A549 (cell line): ENCODE measurements at regions of chr19 and their contacts with region 1.

Region 1: DNA sequence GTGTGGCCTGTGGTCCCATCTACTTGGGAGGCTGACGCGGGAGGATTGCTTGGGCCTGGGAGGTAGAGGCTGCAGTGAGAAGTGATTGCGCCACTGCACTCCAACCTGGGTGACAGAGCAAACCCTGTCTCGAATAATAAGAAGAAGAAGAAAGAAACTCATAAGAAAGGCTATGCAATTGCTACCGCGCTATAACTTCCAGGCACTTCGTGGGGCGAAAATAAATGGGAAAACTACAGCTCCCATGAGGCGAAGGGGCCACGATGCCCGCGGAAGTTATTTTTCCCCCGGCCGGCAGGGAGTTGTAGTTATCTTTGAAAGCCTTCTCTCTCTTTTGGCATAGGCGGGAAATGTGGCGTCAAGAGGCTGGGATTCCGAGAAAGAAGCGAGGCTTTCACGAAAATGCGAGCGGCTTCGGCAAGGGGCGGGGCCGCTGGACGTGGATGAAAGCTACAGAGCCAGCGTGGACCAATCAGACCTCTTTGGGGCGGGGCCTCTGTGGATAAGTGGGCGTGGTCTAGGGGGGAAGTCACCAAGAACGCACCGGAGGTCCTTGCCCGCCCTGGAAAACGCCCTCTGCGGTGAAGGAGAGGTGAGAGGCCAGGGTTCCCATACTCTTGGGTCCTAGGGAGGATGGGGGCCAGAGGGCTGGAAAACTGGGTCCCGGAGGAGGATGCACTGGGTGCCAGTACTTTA is at the start of gene NUCB1:
- DNase-seq: peak; percentile 99 to 100
- ATAC-seq: peak; percentile 93 to 97
- H3K4me3 ChIP-seq: peak within 1 kb of the TSS; percentile 83
- H3K27ac ChIP-seq: peak within 1 kb of the TSS; percentile 87 to 90
- H3K4me1 ChIP-seq: peaks cover 20% of the 10 kb centered on the region; the same call in 2 of the 3 replicates
- CTCF ChIP-seq: no peak
- EP300 ChIP-seq: no peak
- POLR2A ChIP-seq: peak; percentile 64
- RAD21 ChIP-seq: peak; percentile 36 to 52; a peak in 2 of 5 replicates
- polyA plus RNA-seq, gene NUCB1: 58.5 and 79.5 TPM in 2 replicates

Region 2: GRCh38 chr19:48881741-48882657 is 17.9 kb before region 1 on chr19:
- CTCF ChIA-PET with region 1: interaction called, 5 read pairs
- POLR2A ChIA-PET with region 1: interaction called, 14 read pairs
- DNase-seq: peak in 1 of 2 experiments; percentile 58
- ATAC-seq: peak; percentile 56 to 58
- H3K4me3 ChIP-seq: no peak overlapping the region
- H3K27ac ChIP-seq: no peak overlapping the region
- H3K4me1 ChIP-seq: no peaks in the 10 kb centered on the region; the same call in 2 of the 3 replicates
- CTCF ChIP-seq: no peak
- EP300 ChIP-seq: no peak
- POLR2A ChIP-seq: no peak
- RAD21 ChIP-seq: no peak

Region 3: GRCh38 chr19:48910803-48911202 is 10.9 kb after region 1 on chr19:
- CTCF ChIA-PET with region 1: interaction called, 48 read pairs
- POLR2A ChIA-PET with region 1: no interaction called
- DNase-seq: no peak
- ATAC-seq: no peak
- H3K4me3 ChIP-seq: no peak overlapping the region
- H3K27ac ChIP-seq: no peak overlapping the region
- H3K4me1 ChIP-seq: no peaks in the 10 kb centered on the region
- CTCF ChIP-seq: no peak
- EP300 ChIP-seq: no peak
- POLR2A ChIP-seq: no peak
- RAD21 ChIP-seq: no peak

Region 4: GRCh38 chr19:48918801-48919247 is 18.9 kb after region 1 on chr19:
- CTCF ChIA-PET with region 1: interaction called, 48 read pairs
- POLR2A ChIA-PET with region 1: interaction called, 3 read pairs
- DNase-seq: peak in 1 of 2 experiments; percentile 58
- ATAC-seq: peak; percentile 73 to 88; a peak in 5 of 6 replicates
- H3K4me3 ChIP-seq: no peak overlapping the region
- H3K27ac ChIP-seq: no peak overlapping the region
- H3K4me1 ChIP-seq: peaks cover under 1% of the 10 kb centered on the region; the same call in 1 of the 3 replicates
- CTCF ChIP-seq: no peak
- EP300 ChIP-seq: no peak
- POLR2A ChIP-seq: no peak
- RAD21 ChIP-seq: no peak

Region 5: GRCh38 chr19:48987423-48987722 is 87.4 kb after region 1 on chr19:
- CTCF ChIA-PET with region 1: no interaction called
- POLR2A ChIA-PET with region 1: no interaction called
- DNase-seq: no peak
- ATAC-seq: no peak
- H3K4me3 ChIP-seq: no peak overlapping the region
- H3K27ac ChIP-seq: no peak overlapping the region
- H3K4me1 ChIP-seq: peaks cover 9% of the 10 kb centered on the region
- CTCF ChIP-seq: no peak
- EP300 ChIP-seq: no peak
- POLR2A ChIP-seq: no peak
- RAD21 ChIP-seq: no peak

Region 6: GRCh38 chr19:49014123-49014869 is 114.4 kb after region 1 on chr19:
- CTCF ChIA-PET with region 1: no interaction called
- POLR2A ChIA-PET with region 1: no interaction called
- DNase-seq: no peak
- ATAC-seq: no peak
- H3K4me3 ChIP-seq: no peak overlapping the region
- H3K27ac ChIP-seq: no peak overlapping the region
- H3K4me1 ChIP-seq: peaks cover 10% of the 10 kb centered on the region; the same call in 2 of the 3 replicates
- CTCF ChIP-seq: no peak
- EP300 ChIP-seq: no peak
- POLR2A ChIP-seq: no peak
- RAD21 ChIP-seq: no peak